Posterior vena cava (tissue), 2 donors: ENCODE measurements at regions of chr5 and their contacts with region 1.

Region 1: DNA sequence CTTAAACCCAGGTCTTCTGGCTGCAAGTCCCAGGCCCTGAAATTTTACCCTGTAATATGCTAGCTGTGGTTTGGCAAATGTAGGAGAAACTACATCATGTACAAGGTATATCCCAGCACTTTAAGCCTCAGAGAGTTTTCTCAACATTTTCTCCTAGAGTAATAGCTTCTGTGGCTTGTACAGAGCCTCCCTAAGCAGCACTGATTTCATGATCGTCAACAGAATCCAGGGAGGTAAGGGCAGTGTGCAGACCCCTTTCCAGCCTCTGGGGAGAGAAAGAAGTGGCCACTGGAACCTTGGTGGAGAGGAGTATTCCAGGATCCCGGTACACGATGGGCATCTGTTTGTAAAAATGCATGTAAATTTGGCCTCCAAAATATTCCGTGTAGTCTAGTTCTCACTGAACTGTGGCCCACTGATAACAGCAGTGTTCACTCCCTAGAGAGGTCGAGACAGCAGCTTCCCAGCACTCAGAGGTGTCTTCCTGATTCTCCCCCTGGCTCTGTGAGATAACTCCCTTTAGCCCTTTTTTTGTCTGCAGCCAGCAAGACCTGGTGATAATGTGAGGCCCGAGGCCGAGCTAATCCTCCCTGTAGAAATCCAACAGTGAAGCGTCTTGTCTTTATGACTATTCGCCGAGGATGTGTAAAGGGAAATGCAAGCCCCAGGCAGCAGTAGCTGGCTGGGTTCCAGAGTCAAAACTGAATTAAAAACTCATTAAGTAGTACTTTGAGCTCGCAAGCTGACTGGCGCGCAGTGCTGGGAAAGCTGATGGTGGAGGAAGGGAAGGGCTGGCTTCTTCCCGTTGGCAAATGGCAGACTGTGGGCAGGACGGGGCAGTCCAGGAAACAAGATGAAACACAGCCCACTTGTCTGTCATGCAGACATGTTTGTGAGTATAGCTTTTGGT is 59.0 kb downstream of the MAP1B start:
- DNase-seq: peak; percentile 85

Region 2: GRCh38 chr5:71461360-71461759 is 705.0 kb before region 1 on chr5:
- intact Hi-C with region 1: no loop called
- DNase-seq: no peak

Region 3: GRCh38 chr5:72121780-72122445 is 44.4 kb before region 1 on chr5:
- intact Hi-C with region 1: no loop called
- DNase-seq: no peak

Region 4: DNA sequence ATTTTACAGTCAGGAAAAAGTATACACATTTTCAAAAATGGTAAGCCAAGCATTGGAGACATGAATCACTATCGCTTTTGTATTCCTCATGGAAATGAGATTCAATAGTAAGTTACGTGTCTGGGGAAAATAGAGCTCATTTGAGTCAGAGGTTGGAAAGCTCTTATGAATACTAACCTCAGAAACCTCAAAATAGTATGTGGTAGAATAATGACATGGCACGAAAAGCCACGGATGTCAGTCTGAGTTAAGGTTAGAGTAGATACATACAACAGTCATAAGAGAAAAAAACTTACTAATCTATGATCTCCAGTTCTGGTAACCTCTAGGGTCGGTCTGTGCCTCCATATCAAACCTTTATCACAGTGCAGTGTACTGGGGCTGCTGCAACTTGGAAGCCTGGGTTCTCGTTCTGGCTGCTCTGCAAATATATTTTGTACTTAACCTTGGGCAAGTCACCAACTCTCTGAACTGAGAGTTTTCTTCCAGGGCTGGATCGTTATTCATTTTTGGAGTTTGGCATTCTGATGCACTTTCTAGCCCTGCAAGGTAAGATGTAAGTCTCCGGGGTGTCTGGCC is 27.3 kb before region 1 on chr5:
- intact Hi-C with region 1: no loop called
- DNase-seq: no peak

Region 5: DNA sequence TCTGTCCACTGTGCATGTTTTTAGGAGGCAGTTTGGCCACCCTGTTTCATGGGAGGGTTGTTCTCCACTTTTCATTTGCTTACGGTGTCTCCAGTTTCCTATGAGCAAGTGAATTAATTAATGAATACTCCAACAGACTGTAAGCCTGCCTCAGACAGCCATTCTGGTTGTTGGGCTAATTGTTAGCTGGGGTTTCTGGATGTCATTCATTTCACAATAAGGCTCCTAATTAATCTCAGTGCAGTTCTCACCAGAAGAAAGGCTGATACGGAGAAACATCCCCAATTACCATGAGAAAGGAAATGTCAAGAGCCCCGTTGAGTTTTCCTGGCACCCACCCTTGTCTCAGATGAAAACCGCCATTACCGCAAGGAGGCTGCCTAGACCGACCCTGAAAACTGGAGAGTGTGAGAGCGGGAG is 16.8 kb after region 1 on chr5:
- intact Hi-C with region 1: loop called in 1 of 2 experiments (anchors 2 kb)
- DNase-seq: no peak